ENCODE measurements at regions of chr5 and their contacts with region 1.

Region 1: GRCh38 chr5:149434162-149435014 is 55.3 kb upstream of the IL17B start:
- DNase-seq: no peak
- ATAC-seq: peak; percentile 75
- H3K4me3 ChIP-seq: no peak overlapping the region
- H3K27ac ChIP-seq: no peak overlapping the region
- H3K4me1 ChIP-seq: no peaks in the 10 kb centered on the region
- H3K27me3 ChIP-seq: peaks cover 0 to 5% of the 10 kb centered on the region in 2 experiments; a peak in 3 of 4 replicates
- CTCF ChIP-seq: peak; percentile 71 to 84 (median 75)
- EP300 ChIP-seq: no peak
- POLR2A ChIP-seq: no peak
- RAD21 ChIP-seq: peak; percentile 52

Region 2: DNA sequence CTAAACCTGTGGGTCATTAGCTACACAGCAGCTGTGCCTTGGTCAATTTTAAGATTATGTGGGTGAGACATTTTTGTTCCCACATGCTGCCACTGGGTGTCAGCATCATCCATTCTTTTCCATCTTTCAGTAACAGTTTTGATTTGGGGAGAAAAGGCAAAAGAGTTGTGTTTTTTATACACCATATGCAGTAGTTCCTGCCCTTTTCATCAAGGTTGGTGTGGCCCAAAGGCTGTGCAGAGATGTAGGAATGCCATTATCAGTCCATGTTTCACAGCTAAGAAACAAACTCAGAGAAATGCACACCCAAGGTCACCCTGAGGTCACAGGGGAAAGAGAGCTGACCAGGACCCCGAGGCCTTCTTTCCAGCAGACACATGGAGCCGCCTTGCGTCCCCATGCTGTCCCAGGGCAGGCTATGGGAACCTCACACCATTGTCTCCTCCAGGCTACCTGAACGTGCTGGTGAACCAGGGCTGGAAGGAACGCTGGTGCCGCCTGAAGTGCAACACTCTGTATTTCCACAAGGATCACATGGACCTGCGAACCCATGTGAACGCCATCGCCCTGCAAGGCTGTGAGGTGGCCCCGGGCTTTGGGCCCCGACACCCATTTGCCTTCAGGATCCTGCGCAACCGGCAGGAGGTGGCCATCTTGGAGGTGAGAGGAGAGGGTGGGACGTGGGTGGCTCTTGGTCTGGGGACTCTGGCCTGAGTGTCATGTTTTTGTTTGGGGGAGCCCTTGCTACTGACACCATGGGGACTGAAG is 116.9 kb before region 1 on chr5:
- CTCF ChIA-PET with region 1: interaction called, 13 read pairs
- POLR2A ChIA-PET with region 1: interaction called, 3 read pairs
- RAD21 ChIA-PET with region 1: interaction called, 3 read pairs
- SMC1A ChIA-PET with region 1: interaction called, 4 read pairs
- in situ Hi-C with region 1: no loop called
- intact Hi-C with region 1: loop called (anchors 1 kb)
- DNase-seq: no peak
- ATAC-seq: peak; percentile 86
- H3K4me3 ChIP-seq: no peak overlapping the region
- H3K27ac ChIP-seq: no peak overlapping the region
- H3K4me1 ChIP-seq: no peaks in the 10 kb centered on the region
- H3K27me3 ChIP-seq: no peaks in the 10 kb centered on the region; a peak in 1 of 4 replicates
- CTCF ChIP-seq: peak; percentile 67 to 82 (median 72)
- EP300 ChIP-seq: no peak
- POLR2A ChIP-seq: no peak
- RAD21 ChIP-seq: peak; percentile 79

Region 3: GRCh38 chr5:149357370-149358293 is 76.8 kb before region 1 on chr5 and contains the start of gene PCYOX1L:
- CTCF ChIA-PET with region 1: interaction called, 16 read pairs
- POLR2A ChIA-PET with region 1: no interaction called
- RAD21 ChIA-PET with region 1: no interaction called
- SMC1A ChIA-PET with region 1: no interaction called
- in situ Hi-C with region 1: no loop called
- intact Hi-C with region 1: no loop called
- DNase-seq: peak; percentile 82
- ATAC-seq: peak; percentile 100
- H3K4me3 ChIP-seq: peak within 1 kb of the TSS; percentile 84
- H3K27ac ChIP-seq: peak within 1 kb of the TSS; percentile 48
- H3K4me1 ChIP-seq: peaks cover 13% of the 10 kb centered on the region
- H3K27me3 ChIP-seq: no peaks in the 10 kb centered on the region
- CTCF ChIP-seq: no peak
- EP300 ChIP-seq: no peak
- POLR2A ChIP-seq: peak; percentile 87
- RAD21 ChIP-seq: no peak
- polyA plus RNA-seq, gene PCYOX1L: 2.9 to 5.4 TPM

Region 4: GRCh38 chr5:149381987-149382340 is 52.4 kb before region 1 on chr5:
- CTCF ChIA-PET with region 1: interaction called, 137 read pairs
- POLR2A ChIA-PET with region 1: interaction called, 3 read pairs
- RAD21 ChIA-PET with region 1: interaction called, 22 read pairs
- SMC1A ChIA-PET with region 1: interaction called, 52 read pairs
- in situ Hi-C with region 1: no loop called
- intact Hi-C with region 1: loop called (anchors 1 kb)
- DNase-seq: no peak
- ATAC-seq: peak; percentile 97
- H3K4me3 ChIP-seq: no peak overlapping the region
- H3K27ac ChIP-seq: no peak overlapping the region
- H3K4me1 ChIP-seq: no peaks in the 10 kb centered on the region
- H3K27me3 ChIP-seq: peaks cover 0 to 2% of the 10 kb centered on the region in 2 experiments; a peak in 2 of 4 replicates
- CTCF ChIP-seq: peak; percentile 83 to 90 (median 87)
- EP300 ChIP-seq: no peak
- POLR2A ChIP-seq: no peak
- RAD21 ChIP-seq: peak; percentile 69

Region 5: DNA sequence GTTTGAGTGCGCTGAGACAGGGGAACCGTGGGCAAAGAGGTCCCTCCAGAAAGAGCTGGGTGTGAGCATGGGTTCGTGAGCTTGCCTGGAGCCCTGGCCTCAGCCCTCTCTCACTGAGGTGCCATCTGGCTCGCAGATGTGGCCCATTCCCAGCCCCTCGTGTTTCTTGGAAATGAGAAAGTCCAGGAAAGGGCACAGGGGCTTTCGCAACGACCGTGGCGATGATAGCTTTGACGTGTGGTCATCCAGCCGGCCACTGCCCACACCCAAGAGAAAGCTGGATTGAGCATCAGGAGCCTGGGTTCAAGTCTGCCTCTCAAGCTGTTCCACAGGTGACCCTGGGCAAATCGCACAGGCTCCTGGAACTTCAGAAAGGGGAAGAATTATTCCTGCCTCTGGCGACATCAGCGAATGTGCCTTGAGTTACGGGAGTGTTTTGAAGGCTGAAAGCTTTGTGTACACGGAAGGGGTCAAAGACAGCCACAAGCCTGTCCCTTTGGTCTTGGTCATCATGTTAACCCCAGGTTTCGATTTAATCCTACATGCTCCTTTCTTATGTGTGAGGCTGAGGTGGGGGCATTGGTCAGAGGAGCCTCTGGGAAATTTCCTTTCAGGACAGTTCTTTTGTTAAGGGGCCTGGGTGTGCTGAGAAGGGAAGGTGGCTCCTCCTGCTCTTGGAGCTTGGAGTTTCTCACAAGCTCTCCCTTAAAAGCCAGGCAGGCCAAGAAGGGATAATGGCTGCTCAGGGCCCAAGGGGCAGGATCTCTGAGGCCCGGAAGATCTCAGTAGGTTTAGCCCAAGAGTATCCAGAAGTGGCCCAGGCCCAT is 13.6 kb before region 1 on chr5:
- CTCF ChIA-PET with region 1: interaction called, 11 read pairs
- POLR2A ChIA-PET with region 1: interaction called, 3 read pairs
- RAD21 ChIA-PET with region 1: interaction called, 3 read pairs
- SMC1A ChIA-PET with region 1: interaction called, 9 read pairs
- in situ Hi-C with region 1: no loop called
- intact Hi-C with region 1: no loop called
- DNase-seq: no peak
- ATAC-seq: no peak
- H3K4me3 ChIP-seq: no peak overlapping the region
- H3K27ac ChIP-seq: no peak overlapping the region
- H3K4me1 ChIP-seq: no peaks in the 10 kb centered on the region
- H3K27me3 ChIP-seq: no peaks in the 10 kb centered on the region
- CTCF ChIP-seq: no peak
- EP300 ChIP-seq: no peak
- POLR2A ChIP-seq: no peak
- RAD21 ChIP-seq: no peak

Region 6: GRCh38 chr5:149561848-149562247 is 127.5 kb after region 1 on chr5:
- CTCF ChIA-PET with region 1: interaction called, 68 read pairs
- POLR2A ChIA-PET with region 1: interaction called, 4 read pairs
- RAD21 ChIA-PET with region 1: interaction called, 6 read pairs
- SMC1A ChIA-PET with region 1: interaction called, 27 read pairs
- in situ Hi-C with region 1: no loop called
- intact Hi-C with region 1: no loop called
- DNase-seq: no peak
- ATAC-seq: no peak
- H3K4me3 ChIP-seq: no peak overlapping the region
- H3K27ac ChIP-seq: no peak overlapping the region
- H3K4me1 ChIP-seq: no peaks in the 10 kb centered on the region
- H3K27me3 ChIP-seq: no peaks in the 10 kb centered on the region
- CTCF ChIP-seq: no peak
- EP300 ChIP-seq: no peak
- POLR2A ChIP-seq: no peak
- RAD21 ChIP-seq: no peak

Region 7: DNA sequence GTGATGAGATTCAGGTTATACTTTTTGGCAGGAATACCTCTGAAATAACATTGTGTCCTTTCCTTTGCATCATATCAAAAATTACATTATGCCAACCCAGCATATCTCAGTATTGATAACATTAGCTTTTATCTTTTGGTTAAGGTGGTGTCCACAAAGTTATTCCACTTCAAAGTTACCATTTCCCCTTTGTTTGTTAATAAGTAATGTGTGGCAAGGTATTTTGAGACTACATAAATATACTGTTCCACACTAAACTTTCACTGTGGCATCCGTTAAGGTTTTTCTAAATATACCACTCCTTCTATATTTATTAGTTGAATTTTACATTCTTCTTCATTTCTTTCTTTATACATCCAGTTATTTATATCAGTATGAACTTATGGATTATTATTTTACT is 132.8 kb after region 1 on chr5:
- CTCF ChIA-PET with region 1: interaction called, 68 read pairs
- POLR2A ChIA-PET with region 1: interaction called, 4 read pairs
- RAD21 ChIA-PET with region 1: interaction called, 6 read pairs
- SMC1A ChIA-PET with region 1: interaction called, 27 read pairs
- in situ Hi-C with region 1: no loop called
- intact Hi-C with region 1: no loop called
- DNase-seq: no peak
- ATAC-seq: peak; percentile 45
- H3K4me3 ChIP-seq: no peak overlapping the region
- H3K27ac ChIP-seq: no peak overlapping the region
- H3K4me1 ChIP-seq: no peaks in the 10 kb centered on the region
- H3K27me3 ChIP-seq: no peaks in the 10 kb centered on the region
- CTCF ChIP-seq: no peak
- EP300 ChIP-seq: no peak
- POLR2A ChIP-seq: no peak
- RAD21 ChIP-seq: no peak

Measured in GM12878 (cell line).